Common myeloid progenitor, CD34-positive (primary cell): ENCODE measurements at regions of chr6 and their contacts with region 1.

Region 1: GRCh38 chr6:135145063-135145800 is 35.9 kb upstream of the MYB start:
- DNase-seq: peak; percentile 59 to 68 (median 68)
- H3K4me3 ChIP-seq: peak overlapping the region in 5 of 7 experiments; percentile 38 to 76 (median 55)
- H3K27ac ChIP-seq: peak overlapping the region; percentile 59 to 78
- H3K4me1 ChIP-seq: peaks cover 7 to 40% (median 26%) of the 10 kb centered on the region in 4 experiments
- H3K27me3 ChIP-seq: no peaks in the 10 kb centered on the region

Region 2: DNA sequence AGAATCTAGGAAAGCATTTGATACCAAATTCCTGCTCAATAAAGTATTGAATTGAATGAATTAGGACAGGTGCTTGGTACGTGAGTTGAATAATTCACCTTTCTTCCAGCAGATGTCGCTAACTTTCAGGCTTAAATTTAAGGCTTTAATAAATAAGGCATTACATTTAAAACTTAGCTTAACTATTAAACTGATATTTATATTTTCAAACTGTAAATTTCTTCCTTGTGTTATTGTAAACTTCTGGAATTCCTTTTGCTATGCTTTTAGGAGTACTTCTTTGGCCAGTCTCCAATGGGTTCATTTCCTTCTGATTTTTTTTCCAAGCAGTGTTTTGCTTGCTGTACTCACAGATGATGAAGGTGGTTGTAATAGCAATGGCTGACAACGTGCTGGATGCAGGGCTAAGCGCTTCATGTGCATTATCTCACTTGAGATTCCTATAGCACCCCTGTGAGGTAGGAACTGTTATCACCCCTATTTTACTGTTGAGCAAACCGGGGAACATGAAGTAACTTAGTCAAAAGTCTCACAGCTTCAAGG is 1021.5 kb before region 1 on chr6:
- CTCF ChIA-PET with region 1: no interaction called
- POLR2A ChIA-PET with region 1: no interaction called
- DNase-seq: peak; percentile 74 to 82 (median 80)
- H3K4me3 ChIP-seq: no peak overlapping the region
- H3K27ac ChIP-seq: no peak overlapping the region
- H3K4me1 ChIP-seq: no peaks in the 10 kb centered on the region
- H3K27me3 ChIP-seq: no peaks in the 10 kb centered on the region

Region 3: DNA sequence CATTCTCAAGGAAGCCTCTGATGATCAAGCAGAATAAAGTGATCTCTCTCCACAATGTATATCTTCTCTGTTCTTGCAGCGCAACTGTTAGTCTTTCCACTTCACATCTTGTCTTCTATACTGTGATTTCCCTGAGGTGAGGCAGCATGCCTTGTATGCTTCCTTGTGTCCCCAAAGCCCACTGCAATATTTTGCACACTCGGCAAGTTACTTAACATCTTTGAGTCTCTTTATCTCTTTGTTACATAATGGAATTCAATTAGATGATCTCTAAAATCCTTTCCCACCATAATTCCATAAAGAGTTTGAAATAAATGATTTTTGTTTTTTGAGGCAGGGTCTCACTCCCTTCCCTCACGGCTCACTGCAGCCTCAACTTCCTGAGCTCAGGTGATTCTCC is 155.0 kb before region 1 on chr6:
- CTCF ChIA-PET with region 1: no interaction called
- POLR2A ChIA-PET with region 1: no interaction called
- DNase-seq: no peak
- H3K4me3 ChIP-seq: no peak overlapping the region
- H3K27ac ChIP-seq: no peak overlapping the region
- H3K4me1 ChIP-seq: no peaks in the 10 kb centered on the region
- H3K27me3 ChIP-seq: no peaks in the 10 kb centered on the region

Region 4: DNA sequence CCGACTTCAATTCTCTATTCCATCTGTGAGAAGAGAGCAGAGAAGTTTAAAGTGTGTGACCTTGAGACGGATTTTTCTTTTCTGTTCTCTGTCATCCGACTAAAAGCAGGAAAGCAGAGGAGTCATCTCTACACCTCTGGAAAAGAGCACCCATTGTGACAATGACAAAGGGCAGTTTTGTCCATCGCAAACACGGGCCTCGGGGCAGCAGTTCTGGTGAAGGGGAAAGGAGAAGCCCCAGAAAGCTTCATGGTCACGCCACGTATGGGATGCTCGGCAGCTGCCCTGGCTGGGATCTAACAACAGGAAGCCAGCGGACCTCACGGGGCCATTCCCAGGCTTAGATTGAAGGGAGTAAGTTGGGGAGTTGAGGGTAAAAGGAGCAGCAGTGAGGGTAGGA is 38.6 kb before region 1 on chr6:
- CTCF ChIA-PET with region 1: no interaction called
- POLR2A ChIA-PET with region 1: no interaction called
- DNase-seq: no peak
- H3K4me3 ChIP-seq: no peak overlapping the region
- H3K27ac ChIP-seq: no peak overlapping the region
- H3K4me1 ChIP-seq: peaks cover 4 to 27% (median 11%) of the 10 kb centered on the region in 4 experiments
- H3K27me3 ChIP-seq: no peaks in the 10 kb centered on the region

Region 5: GRCh38 chr6:135128268-135128914 is 16.8 kb before region 1 on chr6:
- CTCF ChIA-PET with region 1: interaction called, 10 read pairs
- POLR2A ChIA-PET with region 1: interaction called, 3 read pairs
- DNase-seq: peak; percentile 60 to 91 (median 87)
- H3K4me3 ChIP-seq: peak overlapping the region in 1 of 7 experiments; percentile 36
- H3K27ac ChIP-seq: peak overlapping the region in 1 of 2 experiments; percentile 46
- H3K4me1 ChIP-seq: peaks cover 12 to 27% (median 16%) of the 10 kb centered on the region in 4 experiments
- H3K27me3 ChIP-seq: no peaks in the 10 kb centered on the region

Region 6: GRCh38 chr6:135159531-135159930 is 14.3 kb after region 1 on chr6:
- CTCF ChIA-PET with region 1: interaction called, 11 read pairs
- POLR2A ChIA-PET with region 1: no interaction called
- DNase-seq: no peak
- H3K4me3 ChIP-seq: no peak overlapping the region
- H3K27ac ChIP-seq: no peak overlapping the region
- H3K4me1 ChIP-seq: peaks cover 0 to 13% (median 0%) of the 10 kb centered on the region in 4 experiments
- H3K27me3 ChIP-seq: no peaks in the 10 kb centered on the region

Region 7: DNA sequence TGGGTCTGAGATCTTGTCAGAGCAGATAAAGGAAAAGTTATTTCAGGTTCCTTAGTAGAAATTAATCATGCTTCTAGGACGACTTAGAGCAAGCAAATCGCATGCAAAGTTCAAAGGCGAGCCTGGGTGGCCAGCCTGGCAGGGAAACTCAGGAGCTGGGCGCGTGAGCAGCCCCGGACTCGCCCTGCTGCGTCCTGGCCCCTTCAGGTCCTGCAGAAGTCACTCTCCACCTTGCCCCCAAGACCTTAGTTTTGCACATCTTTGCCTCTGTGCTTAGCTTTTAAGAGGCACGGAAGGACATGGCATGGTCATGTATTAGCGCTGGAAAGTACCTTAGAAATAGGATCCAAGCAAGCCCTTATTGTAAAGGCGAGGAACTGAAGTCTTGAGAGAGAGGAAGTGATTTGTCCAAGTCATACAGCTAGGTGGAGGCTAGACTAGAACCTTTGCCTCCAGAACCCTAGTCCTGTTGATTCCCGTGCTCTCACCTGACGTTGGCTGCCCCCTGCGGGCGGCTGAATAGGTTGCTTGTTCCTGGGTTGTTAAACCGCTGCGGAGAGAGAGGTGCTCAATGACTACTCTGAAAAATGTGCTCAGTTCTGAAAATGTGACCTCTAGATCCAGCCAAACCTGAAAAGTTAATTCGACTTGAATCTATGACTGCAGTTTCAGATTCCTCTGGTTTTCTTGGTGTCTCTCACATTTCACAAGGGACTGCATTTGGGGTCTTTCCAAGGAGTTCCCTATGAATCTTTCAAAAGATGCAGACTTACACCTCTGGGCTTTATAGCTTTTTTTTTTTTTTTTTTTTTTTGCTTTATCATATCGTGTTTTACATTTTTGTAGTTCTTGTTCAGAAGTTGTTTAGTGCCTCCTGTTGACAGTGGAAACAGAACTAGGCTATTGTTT is 38.6 kb after region 1 on chr6:
- CTCF ChIA-PET with region 1: interaction called, 29 read pairs
- POLR2A ChIA-PET with region 1: interaction called, 3 read pairs
- DNase-seq: peak; percentile 84 to 90 (median 90)
- H3K4me3 ChIP-seq: peak overlapping the region; percentile 81 to 100 (median 98)
- H3K27ac ChIP-seq: peak overlapping the region; percentile 46 to 84
- H3K4me1 ChIP-seq: peaks cover 22 to 68% (median 45%) of the 10 kb centered on the region in 4 experiments
- H3K27me3 ChIP-seq: no peaks in the 10 kb centered on the region

Region 8: GRCh38 chr6:135423649-135424128 is 278.5 kb after region 1 on chr6:
- CTCF ChIA-PET with region 1: interaction called, 19 read pairs
- POLR2A ChIA-PET with region 1: no interaction called
- DNase-seq: peak; percentile 67 to 72 (median 67)
- H3K4me3 ChIP-seq: no peak overlapping the region
- H3K27ac ChIP-seq: no peak overlapping the region
- H3K4me1 ChIP-seq: peaks cover 16 to 63% (median 32%) of the 10 kb centered on the region in 4 experiments
- H3K27me3 ChIP-seq: no peaks in the 10 kb centered on the region